HEK293 (cell line): ENCODE measurements at regions of chr12 and their contacts with region 1.

Region 1: DNA sequence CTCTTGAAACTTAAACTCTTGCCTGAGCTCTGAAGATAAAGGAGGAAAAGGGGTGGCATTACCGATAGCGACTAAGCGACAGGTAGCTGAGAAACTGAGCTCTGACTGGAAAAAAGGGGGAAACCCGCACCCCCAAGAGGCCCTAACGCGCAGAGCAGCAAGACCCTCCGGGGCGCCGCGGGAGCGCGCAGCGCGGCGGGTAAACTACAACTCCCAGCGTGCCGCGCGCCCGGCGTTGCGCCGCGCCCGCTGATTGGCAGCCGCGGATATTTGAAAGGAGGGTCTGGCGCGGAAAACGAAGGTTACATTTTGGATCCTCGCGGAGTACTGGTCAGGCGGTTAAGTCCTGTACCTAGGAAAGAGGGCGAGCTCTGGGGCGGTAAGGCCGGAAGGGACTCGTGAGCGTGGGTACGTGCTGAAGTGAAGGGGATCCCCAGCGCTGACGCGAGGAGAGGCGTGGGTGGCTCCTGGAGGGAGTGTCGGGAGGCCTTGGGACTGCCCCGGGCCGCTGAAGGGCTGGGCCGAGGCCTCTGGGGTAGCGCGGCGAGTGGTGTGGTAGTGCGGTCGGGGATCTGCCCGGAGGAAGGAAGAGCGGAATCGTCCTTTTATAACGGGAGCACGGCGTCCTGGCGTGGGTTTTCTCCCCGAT is at the start of gene ESPL1:
- H3K4me3 ChIP-seq: peak within 1 kb of the TSS; percentile 74
- H3K27ac ChIP-seq: peak within 1 kb of the TSS; percentile 75; the same call in 1 of the 2 replicates
- H3K4me1 ChIP-seq: peaks cover 5% of the 10 kb centered on the region; the same call in 1 of the 2 replicates
- CTCF ChIP-seq: peak; percentile 73

Region 2: DNA sequence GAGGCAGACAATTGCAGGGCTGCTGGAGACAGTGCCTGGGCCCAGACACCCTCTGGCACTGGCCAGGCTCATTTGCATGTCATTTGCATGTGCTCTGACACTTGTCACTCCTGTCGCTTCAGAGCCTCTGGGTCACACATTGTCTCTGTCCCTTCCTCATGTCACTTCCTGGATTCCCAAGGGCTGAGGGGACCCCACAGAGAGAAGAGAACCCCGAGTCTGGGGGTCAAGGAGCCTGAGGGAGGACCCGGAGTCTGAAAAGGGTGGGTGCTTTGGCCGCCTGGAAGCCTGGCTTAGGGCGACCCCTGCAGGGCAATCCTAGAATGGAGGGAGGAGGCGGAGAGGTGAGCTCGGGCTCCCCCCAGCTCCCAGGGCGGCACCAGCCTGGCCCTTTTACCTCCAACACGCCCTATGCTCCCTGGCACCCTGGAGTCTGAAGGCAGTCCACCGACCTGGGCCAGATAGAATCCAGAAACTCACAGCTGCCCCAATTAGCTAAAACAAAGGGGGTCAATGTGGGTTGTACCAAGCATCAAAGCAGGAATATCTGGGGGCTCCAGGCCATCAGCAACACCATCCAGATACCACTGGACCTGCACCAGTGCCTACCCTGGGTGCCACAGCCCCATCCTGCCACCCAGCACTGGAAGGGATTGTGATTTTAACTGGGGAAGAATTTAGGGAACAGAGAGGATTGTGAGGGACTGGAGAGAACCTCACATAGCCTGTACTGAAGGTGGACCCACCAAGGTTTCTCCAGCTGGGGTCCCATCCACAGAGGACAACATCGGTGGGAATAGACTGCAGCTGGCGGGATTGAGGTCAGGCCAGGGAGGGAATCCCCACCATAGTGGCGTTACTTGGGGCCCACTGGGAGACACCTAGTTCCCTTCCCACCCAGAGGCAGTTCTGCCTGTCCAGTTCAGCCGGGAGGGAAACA is 397.5 kb before region 1 on chr12:
- CTCF ChIA-PET with region 1: no interaction called
- POLR2A ChIA-PET with region 1: no interaction called
- H3K4me3 ChIP-seq: no peak overlapping the region
- H3K27ac ChIP-seq: no peak overlapping the region
- H3K4me1 ChIP-seq: peaks cover 13% of the 10 kb centered on the region; the same call in 1 of the 2 replicates
- CTCF ChIP-seq: peak; percentile 84

Region 3: DNA sequence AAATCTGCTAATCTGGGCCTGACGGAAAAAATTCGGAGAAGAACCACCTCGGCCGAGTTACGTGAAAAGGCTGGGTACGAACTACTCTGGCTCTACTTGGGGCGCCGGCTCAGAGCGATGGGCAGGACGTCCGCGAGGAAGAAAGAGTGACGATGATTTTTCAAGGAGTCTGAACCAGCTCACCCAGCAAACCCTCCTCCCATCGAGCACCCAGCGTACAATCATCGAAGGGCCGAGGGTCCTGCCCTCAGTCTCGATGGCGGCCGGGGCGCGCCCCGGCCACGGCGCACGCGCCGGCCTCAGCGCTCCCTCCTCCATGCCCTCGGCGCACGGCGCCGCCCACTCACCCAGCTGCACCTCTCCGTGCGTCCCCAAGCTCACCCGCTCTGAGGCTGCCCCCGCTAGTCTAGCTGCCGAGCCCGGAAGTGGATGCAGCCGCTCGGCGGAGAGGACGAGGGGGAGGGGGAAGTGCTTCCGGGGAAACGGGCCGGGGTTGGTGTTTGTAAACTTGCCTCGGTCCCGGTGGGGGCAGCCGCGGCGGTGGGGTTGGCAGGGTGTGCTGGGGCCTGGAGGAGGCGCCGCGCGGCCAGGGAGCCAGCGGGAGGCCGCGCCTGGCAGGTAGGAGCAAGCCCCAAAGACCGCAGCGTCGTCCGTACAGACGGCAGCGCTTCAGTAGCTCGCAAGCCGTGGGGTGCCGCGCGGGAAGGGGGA is 87.7 kb before region 1 on chr12 and contains the starts of genes CSAD and ZNF740:
- CTCF ChIA-PET with region 1: interaction called, 4 read pairs
- POLR2A ChIA-PET with region 1: interaction called, 13 read pairs
- H3K4me3 ChIP-seq: peak within 1 kb of the TSS; percentile 80
- H3K27ac ChIP-seq: peak within 1 kb of the TSS; percentile 80
- H3K4me1 ChIP-seq: peaks cover 16% of the 10 kb centered on the region; the same call in 1 of the 2 replicates
- CTCF ChIP-seq: peak; percentile 79

Region 4: DNA sequence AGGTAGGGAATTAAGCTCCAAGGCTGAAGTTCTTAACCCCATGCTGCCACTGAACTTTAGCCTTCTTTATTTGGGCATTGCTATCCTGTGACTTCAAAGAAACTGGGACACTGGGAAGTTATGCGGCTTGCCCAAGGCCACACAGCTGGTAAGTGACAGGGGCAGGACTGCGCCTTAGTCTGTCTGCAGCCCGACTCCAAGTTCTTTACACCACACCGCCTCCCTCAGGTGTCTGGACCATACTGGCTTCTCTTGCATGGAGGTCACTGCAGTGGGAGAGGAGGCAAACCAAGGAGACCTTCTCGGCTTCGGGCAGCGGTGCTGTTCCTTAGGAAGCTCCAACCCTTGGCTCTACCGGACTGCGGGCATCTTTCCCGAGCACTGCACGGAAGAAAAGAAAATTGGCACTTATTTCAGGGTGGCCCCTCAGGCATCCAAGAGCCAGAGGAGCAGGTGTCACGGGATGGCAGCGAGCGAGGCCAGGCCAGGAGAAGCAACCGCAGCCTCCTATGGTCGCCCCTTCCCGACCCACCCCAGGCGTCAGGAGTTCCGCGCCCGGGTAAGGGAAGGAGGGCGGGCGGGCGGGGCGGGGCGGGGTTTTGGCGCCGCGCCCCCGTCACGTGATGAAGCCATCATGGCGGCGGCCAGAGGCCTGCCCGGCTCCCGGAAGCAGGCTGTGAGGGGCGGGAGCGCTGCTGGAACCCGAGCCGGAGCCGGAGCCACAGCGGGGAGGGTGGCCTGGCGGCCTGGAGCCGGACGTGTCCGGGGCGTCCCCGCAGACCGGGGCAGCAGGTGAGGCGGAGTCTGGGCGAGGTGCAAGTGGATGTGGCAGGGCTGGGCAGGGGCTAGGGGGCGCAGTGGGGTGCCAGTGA is 16.4 kb before region 1 on chr12:
- CTCF ChIA-PET with region 1: interaction called, 8 read pairs
- POLR2A ChIA-PET with region 1: interaction called, 11 read pairs
- H3K4me3 ChIP-seq: peak overlapping the region; percentile 91
- H3K27ac ChIP-seq: peak overlapping the region; percentile 61
- H3K4me1 ChIP-seq: peaks cover 4% of the 10 kb centered on the region; the same call in 1 of the 2 replicates
- CTCF ChIP-seq: peak; percentile 92

Region 5: GRCh38 chr12:53279283-53279869 is 11.3 kb after region 1 on chr12:
- CTCF ChIA-PET with region 1: interaction called, 4 read pairs
- POLR2A ChIA-PET with region 1: interaction called, 22 read pairs
- H3K4me3 ChIP-seq: no peak overlapping the region
- H3K27ac ChIP-seq: no peak overlapping the region
- H3K4me1 ChIP-seq: no peaks in the 10 kb centered on the region
- CTCF ChIP-seq: no peak

Region 6: DNA sequence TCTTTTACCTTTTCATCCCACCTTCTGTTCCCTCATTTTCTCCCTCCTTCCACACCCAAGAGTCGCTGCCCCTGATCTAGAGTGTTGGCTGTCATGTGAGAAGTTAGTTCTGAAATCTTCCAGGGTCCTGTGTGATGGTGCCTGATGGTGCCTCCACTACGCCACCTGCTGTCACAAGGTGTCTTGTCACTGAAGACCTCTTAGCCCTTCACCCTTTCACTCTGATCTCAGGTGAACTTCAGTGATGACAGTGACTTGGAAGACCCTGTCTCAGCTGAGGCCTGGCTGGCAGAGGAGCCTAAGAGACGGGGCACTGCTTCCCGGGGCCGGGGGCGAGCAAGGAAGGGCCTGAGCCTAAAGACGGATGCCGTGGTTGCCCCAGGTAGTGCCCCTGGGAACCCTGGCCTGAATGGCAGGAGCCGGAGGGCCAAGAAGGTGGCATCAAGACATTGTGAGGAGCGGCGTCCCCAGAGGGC is 19.7 kb after region 1 on chr12:
- CTCF ChIA-PET with region 1: interaction called, 26 read pairs
- POLR2A ChIA-PET with region 1: interaction called, 7 read pairs
- H3K4me3 ChIP-seq: no peak overlapping the region
- H3K27ac ChIP-seq: no peak overlapping the region
- H3K4me1 ChIP-seq: no peaks in the 10 kb centered on the region
- CTCF ChIP-seq: peak; percentile 45; the same call in 1 of the 2 replicates

Region 7: GRCh38 chr12:53295070-53295890 is 27.2 kb after region 1 on chr12 and contains the start of gene PFDN5:
- CTCF ChIA-PET with region 1: interaction called, 5 read pairs
- POLR2A ChIA-PET with region 1: interaction called, 10 read pairs
- H3K4me3 ChIP-seq: peak within 1 kb of the TSS; percentile 73
- H3K27ac ChIP-seq: peak within 1 kb of the TSS; percentile 61
- H3K4me1 ChIP-seq: peaks cover 4% of the 10 kb centered on the region
- CTCF ChIP-seq: no peak

Region 8: GRCh38 chr12:53561590-53561953 is 293.4 kb after region 1 on chr12:
- CTCF ChIA-PET with region 1: no interaction called
- POLR2A ChIA-PET with region 1: no interaction called
- H3K4me3 ChIP-seq: no peak overlapping the region
- H3K27ac ChIP-seq: no peak overlapping the region
- H3K4me1 ChIP-seq: 0 out of 2 replicates have a peak, but pooled peaks cover 2% of the 10 kb centered on the region
- CTCF ChIP-seq: no peak